Lower lobe of right lung (tissue), 2 donors: ENCODE measurements at regions of chr20 and their contacts with region 1.

Region 1: GRCh38 chr20:19205977-19206396 is 6.5 kb upstream of the SLC24A3 start:
- DNase-seq: peak; percentile 86
- ATAC-seq: peak; percentile 81 to 82
- H3K4me3 ChIP-seq: no peak overlapping the region
- H3K27ac ChIP-seq: no peak overlapping the region
- H3K4me1 ChIP-seq: peaks cover 9% of the 10 kb centered on the region
- H3K27me3 ChIP-seq: no peaks in the 10 kb centered on the region
- CTCF ChIP-seq: peak; percentile 89

Region 2: DNA sequence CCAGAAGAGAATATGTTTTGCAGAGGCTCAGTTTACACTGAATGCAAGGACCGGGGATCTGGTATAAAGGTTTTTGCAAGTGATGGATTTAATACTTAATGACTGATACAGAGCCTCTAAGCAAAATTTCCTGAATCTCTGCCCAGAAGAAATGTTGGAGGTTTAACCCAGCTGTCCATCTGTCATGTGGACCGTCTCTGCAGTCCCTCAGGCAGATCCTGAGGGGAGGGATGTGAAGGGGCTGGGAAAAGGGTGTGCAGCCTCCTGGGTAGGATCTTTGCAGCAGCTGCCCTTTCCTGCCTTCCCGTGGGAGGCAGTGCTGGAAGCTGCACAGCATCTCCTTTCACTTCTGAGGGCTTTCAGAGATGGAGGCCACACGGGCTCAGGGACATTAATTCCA is 213.4 kb after region 1 on chr20:
- intact Hi-C with region 1: no loop called
- DNase-seq: no peak
- ATAC-seq: no peak
- H3K4me3 ChIP-seq: no peak overlapping the region
- H3K27ac ChIP-seq: no peak overlapping the region
- H3K4me1 ChIP-seq: no peaks in the 10 kb centered on the region
- H3K27me3 ChIP-seq: no peaks in the 10 kb centered on the region
- CTCF ChIP-seq: no peak

Region 3: DNA sequence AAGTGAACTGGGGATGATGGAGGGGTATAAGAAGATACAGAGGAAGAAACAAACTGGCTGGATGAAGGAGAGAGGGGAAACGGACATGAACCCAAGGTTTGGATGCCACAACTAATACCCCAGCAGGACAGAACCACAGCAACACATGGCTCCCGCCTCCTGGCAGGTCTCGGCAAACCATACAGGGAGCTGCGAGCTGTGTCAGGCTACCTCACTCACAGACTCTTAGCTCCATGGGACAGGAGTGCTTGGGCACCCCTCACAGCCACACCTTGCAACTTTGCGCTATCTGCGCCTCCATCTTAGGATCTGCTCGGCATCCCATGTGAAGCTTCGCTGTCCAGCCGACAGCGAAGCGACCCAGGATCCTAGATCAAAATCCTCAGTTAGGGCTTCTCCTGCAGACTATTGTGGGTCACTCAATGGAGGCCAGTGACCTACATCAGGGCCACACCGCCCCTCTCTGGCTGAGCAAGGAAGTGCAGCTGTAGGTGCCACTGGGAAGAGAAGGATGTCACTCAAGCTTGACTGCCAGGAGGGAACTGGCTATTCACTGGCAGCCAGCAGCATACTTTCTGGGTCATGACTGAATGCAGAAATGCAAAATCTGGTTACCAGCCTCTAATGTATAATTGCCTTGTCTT is 377.7 kb after region 1 on chr20:
- intact Hi-C with region 1: loop called (anchors 10 kb)
- DNase-seq: peak; percentile 84
- ATAC-seq: peak; percentile 91 to 92
- H3K4me3 ChIP-seq: no peak overlapping the region
- H3K27ac ChIP-seq: no peak overlapping the region
- H3K4me1 ChIP-seq: no peaks in the 10 kb centered on the region
- H3K27me3 ChIP-seq: no peaks in the 10 kb centered on the region
- CTCF ChIP-seq: peak; percentile 86

Region 4: DNA sequence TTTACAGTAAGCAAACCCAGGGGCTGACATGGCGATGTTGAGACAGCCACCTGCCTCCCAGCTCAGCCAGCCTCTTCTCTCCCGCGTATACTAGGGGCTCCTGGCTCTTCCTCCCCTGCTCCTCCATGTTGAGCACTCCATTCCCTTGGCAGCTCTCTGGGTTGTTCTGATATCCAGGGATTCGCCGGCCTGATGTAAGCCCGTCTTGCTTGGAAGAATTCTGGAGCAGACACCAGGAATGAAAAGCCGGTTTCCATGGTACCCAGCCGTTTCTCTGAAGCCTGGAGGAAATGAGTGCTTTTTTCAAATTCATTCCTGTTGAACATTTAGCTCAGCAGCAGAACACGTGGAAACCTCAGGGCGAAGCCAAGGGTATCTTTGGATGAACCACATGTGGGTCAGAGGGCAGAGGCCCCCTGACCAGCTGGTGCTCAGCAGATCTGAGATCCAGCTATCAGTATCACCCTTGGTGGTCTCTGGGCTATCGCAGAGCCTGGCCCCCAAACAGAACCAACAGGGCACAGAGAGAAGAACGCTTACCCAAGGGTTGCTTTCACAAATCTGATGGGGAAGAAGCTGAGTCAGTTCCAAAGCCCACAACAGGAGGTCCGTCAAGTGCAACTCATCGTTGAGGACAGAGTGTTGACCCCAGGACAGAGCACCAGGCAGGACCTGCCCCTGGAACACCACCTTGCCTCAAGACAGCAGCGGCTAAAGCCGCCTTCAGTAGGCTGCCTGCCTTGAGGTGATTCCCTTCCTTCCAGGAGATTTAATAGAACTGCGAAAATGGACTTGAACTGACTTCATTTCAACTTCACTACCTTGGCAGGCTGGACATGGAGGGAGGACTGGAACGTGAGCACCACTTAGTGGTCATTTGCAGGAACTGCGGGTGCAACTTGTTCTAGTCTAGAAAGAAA is 456.0 kb after region 1 on chr20:
- intact Hi-C with region 1: loop called (anchors 5 kb)
- DNase-seq: peak; percentile 51
- ATAC-seq: peak; percentile 77 to 79
- H3K4me3 ChIP-seq: no peak overlapping the region
- H3K27ac ChIP-seq: no peak overlapping the region
- H3K4me1 ChIP-seq: no peaks in the 10 kb centered on the region
- H3K27me3 ChIP-seq: no peaks in the 10 kb centered on the region
- CTCF ChIP-seq: peak; percentile 96